ENCODE measurements at regions of chr16 and their contacts with region 1.

Region 1: GRCh38 chr16:50806099-50807062 is 64.5 kb downstream of the CYLD start:
- DNase-seq: peak; percentile 86
- ATAC-seq: peak; percentile 96
- H3K4me3 ChIP-seq: peak overlapping the region; percentile 35 to 50
- H3K27ac ChIP-seq: no peak overlapping the region
- H3K4me1 ChIP-seq: peaks cover 0 to 3% of the 10 kb centered on the region in 2 experiments; a peak in 1 of 4 replicates
- H3K27me3 ChIP-seq: no peaks in the 10 kb centered on the region
- CTCF ChIP-seq: peak; percentile 77 to 97 (median 93)
- POLR2A ChIP-seq: no peak
- RAD21 ChIP-seq: peak; percentile 69

Region 2: DNA sequence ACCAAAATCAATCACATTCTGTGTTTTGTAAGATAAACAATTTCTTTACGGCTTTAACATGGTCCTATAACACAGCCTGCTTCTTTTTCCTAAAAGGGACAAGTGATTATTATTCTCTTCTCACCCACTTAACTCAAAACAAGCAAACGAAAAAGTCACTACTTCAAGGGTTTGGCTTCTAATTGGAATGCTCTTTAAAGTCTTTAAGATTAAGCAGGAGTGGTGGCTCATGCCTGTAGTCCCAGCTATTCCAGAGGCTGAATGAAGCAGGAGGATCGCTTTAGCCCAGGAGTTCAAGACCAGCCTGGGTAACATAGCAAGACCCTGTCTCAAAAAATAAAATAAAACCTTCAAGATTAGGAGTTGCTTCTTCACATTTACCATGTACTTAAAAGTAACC is 847.9 kb before region 1 on chr16:
- CTCF ChIA-PET with region 1: interaction called, 10 read pairs
- POLR2A ChIA-PET with region 1: no interaction called
- RAD21 ChIA-PET with region 1: no interaction called
- intact Hi-C with region 1: no loop called
- DNase-seq: no peak
- ATAC-seq: no peak
- H3K4me3 ChIP-seq: no peak overlapping the region
- H3K27ac ChIP-seq: no peak overlapping the region
- H3K4me1 ChIP-seq: peaks cover 0 to 4% of the 10 kb centered on the region in 2 experiments; a peak in 2 of 4 replicates
- H3K27me3 ChIP-seq: no peaks in the 10 kb centered on the region
- CTCF ChIP-seq: no peak
- POLR2A ChIP-seq: no peak
- RAD21 ChIP-seq: no peak

Region 3: GRCh38 chr16:50354629-50355456 is 451.5 kb before region 1 on chr16:
- CTCF ChIA-PET with region 1: interaction called, 12 read pairs
- POLR2A ChIA-PET with region 1: no interaction called
- RAD21 ChIA-PET with region 1: no interaction called
- intact Hi-C with region 1: no loop called
- DNase-seq: no peak
- ATAC-seq: no peak
- H3K4me3 ChIP-seq: no peak overlapping the region
- H3K27ac ChIP-seq: no peak overlapping the region
- H3K4me1 ChIP-seq: no peaks in the 10 kb centered on the region
- H3K27me3 ChIP-seq: no peaks in the 10 kb centered on the region
- CTCF ChIP-seq: peak; percentile 38 to 69 (median 51); a peak in 5 of 6 replicates
- POLR2A ChIP-seq: no peak
- RAD21 ChIP-seq: peak; percentile 34; the same call in 1 of the 2 replicates

Region 4: GRCh38 chr16:50573947-50574744 is 232.2 kb before region 1 on chr16:
- CTCF ChIA-PET with region 1: no interaction called
- POLR2A ChIA-PET with region 1: no interaction called
- RAD21 ChIA-PET with region 1: no interaction called
- intact Hi-C with region 1: no loop called
- DNase-seq: no peak
- ATAC-seq: no peak
- H3K4me3 ChIP-seq: no peak overlapping the region
- H3K27ac ChIP-seq: no peak overlapping the region
- H3K4me1 ChIP-seq: no peaks in the 10 kb centered on the region
- H3K27me3 ChIP-seq: no peaks in the 10 kb centered on the region
- CTCF ChIP-seq: no peak
- POLR2A ChIP-seq: no peak
- RAD21 ChIP-seq: no peak

Region 5: GRCh38 chr16:50665128-50665878 is 141.1 kb before region 1 on chr16:
- CTCF ChIA-PET with region 1: interaction called, 62 read pairs
- POLR2A ChIA-PET with region 1: interaction called, 4 read pairs
- RAD21 ChIA-PET with region 1: interaction called, 5 to 7 read pairs
- intact Hi-C with region 1: no loop called
- DNase-seq: peak; percentile 41
- ATAC-seq: peak; percentile 93
- H3K4me3 ChIP-seq: peak overlapping the region; percentile 35 to 48
- H3K27ac ChIP-seq: no peak overlapping the region; the same call in 1 of the 2 replicates
- H3K4me1 ChIP-seq: peaks cover 0 to 5% of the 10 kb centered on the region in 2 experiments; a peak in 1 of 4 replicates
- H3K27me3 ChIP-seq: no peaks in the 10 kb centered on the region
- CTCF ChIP-seq: peak; percentile 78 to 90 (median 81)
- POLR2A ChIP-seq: no peak
- RAD21 ChIP-seq: peak; percentile 93

Region 6: DNA sequence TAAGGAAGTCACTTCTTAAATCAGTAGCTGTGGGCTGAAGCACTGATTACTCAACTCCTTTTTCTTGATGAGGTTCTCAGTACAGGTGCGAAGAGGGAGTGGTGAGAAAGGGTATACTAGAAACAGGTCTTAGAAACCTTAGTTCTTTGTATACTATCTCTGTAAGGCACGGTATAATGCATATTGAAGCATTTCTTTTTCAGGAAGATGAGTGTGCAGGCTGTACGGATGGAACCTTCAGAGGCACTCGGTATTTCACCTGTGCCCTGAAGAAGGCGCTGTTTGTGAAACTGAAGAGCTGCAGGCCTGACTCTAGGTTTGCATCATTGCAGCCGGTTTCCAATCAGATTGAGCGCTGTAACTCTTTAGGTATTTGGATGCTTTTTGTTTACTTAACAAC is 25.3 kb before region 1 on chr16:
- CTCF ChIA-PET with region 1: interaction called, 18 read pairs
- POLR2A ChIA-PET with region 1: no interaction called
- RAD21 ChIA-PET with region 1: no interaction called
- intact Hi-C with region 1: no loop called
- DNase-seq: no peak
- ATAC-seq: peak; percentile 57
- H3K4me3 ChIP-seq: no peak overlapping the region
- H3K27ac ChIP-seq: no peak overlapping the region
- H3K4me1 ChIP-seq: no peaks in the 10 kb centered on the region
- H3K27me3 ChIP-seq: no peaks in the 10 kb centered on the region
- CTCF ChIP-seq: peak in 2 of 3 experiments; percentile 38 to 54; a peak in 4 of 6 replicates
- POLR2A ChIP-seq: no peak
- RAD21 ChIP-seq: no peak

Region 7: GRCh38 chr16:50884066-50884860 is 77.9 kb after region 1 on chr16:
- CTCF ChIA-PET with region 1: interaction called, 11 read pairs
- POLR2A ChIA-PET with region 1: no interaction called
- RAD21 ChIA-PET with region 1: interaction called in 1 of 2 experiments, 3 read pairs
- intact Hi-C with region 1: no loop called
- DNase-seq: no peak
- ATAC-seq: peak; percentile 87
- H3K4me3 ChIP-seq: no peak overlapping the region
- H3K27ac ChIP-seq: no peak overlapping the region
- H3K4me1 ChIP-seq: no peaks in the 10 kb centered on the region
- H3K27me3 ChIP-seq: 0 out of 2 replicates have a peak, but pooled peaks cover under 1% of the 10 kb centered on the region
- CTCF ChIP-seq: peak; percentile 13 to 69 (median 45); a peak in 4 of 6 replicates
- POLR2A ChIP-seq: no peak
- RAD21 ChIP-seq: peak; percentile 43

Region 8: DNA sequence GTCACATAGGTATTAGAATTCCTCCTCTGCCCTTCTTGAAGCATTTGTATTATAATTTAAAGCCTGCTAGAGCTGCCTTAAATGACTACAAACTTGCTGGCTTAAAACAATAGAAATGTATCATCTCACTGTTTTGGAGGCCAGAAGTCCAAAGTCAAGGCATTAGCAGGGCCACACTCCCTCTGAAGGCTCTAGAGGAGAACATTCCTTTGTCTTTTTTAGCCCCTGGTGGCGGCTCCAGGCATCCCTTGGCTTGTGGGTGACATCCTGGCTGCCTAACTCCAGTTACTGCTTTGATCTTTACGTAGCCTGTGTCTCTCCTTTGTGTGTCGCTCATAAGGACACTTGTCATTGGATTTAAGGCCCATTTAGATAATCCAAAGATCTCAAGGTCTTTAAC is 531.3 kb after region 1 on chr16:
- CTCF ChIA-PET with region 1: no interaction called
- POLR2A ChIA-PET with region 1: no interaction called
- RAD21 ChIA-PET with region 1: no interaction called
- intact Hi-C with region 1: no loop called
- DNase-seq: no peak
- ATAC-seq: no peak
- H3K4me3 ChIP-seq: no peak overlapping the region
- H3K27ac ChIP-seq: no peak overlapping the region
- H3K4me1 ChIP-seq: no peaks in the 10 kb centered on the region
- H3K27me3 ChIP-seq: no peaks in the 10 kb centered on the region
- CTCF ChIP-seq: no peak
- POLR2A ChIP-seq: no peak
- RAD21 ChIP-seq: no peak

Measured in HCT116 (cell line).